HEK293 (cell line): ENCODE measurements at regions of chr7 and their contacts with region 1.

Region 1: DNA sequence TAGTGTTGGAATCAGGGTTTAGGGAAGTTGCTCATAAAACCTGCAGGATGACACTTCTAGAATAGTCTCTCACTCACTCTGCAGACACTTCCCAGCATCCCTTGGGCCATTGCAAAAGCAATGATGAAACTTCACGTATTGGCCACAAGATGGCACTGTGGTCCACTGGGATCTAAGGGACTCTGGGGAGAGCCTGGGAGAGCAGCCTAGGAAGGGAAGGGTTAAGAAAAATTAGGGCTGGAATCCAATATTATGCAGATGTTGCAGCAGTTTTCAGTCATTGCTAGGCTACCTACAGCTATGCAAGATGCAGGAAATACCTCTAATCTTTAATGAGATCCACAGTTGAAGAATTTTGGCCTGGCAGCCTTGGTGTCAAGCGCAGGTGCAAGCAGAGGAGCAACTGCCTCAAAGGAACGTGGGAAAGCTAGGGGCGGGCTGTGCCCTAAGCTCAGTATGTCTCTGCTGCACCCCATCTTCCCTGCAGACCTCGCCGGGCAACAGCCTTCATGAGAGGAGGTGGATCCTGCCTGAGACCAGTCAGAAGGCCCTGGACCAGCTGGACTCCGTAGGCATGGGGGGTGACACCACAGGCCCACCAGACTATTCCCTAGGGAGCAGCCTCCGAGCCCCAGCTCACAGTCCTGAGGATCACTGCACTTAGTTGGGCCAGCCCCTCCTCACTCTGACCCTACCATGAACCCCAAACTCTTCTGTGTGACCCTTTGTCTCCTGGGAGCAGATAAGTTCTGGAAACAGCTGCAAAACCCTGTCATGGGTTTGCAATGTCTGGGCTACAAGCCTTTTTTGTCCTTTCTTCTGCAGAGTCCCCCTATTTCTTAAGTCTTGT is 127.9 kb upstream of the PRSS58 start:
- H3K4me3 ChIP-seq: no peak overlapping the region
- H3K27ac ChIP-seq: no peak overlapping the region
- H3K4me1 ChIP-seq: no peaks in the 10 kb centered on the region
- CTCF ChIP-seq: peak; percentile 48

Region 2: DNA sequence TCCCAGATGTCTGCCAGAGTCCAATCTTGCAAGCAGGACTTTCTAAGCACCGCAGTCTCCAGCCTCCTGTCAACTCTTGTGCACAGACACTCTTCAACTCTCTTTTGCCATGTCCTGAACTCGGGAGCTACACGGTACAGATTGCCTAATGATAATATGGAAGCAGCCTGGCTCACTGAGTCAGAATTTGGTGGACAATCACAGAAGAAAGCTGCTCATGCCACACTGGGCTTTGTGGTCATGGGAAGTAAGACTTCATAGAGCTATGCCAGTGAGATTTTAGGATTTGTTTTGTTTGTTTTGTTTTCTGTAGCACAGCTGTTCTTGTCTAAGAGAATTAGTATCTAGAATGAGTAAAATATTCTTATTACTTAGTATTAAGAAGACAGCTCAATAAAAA is 16.2 kb after region 1 on chr7:
- CTCF ChIA-PET with region 1: interaction called, 15 read pairs
- POLR2A ChIA-PET with region 1: no interaction called
- H3K4me3 ChIP-seq: no peak overlapping the region
- H3K27ac ChIP-seq: no peak overlapping the region
- H3K4me1 ChIP-seq: no peaks in the 10 kb centered on the region
- CTCF ChIP-seq: no peak

Region 3: GRCh38 chr7:142528608-142529408 is 143.1 kb after region 1 on chr7:
- CTCF ChIA-PET with region 1: no interaction called
- POLR2A ChIA-PET with region 1: no interaction called
- H3K4me3 ChIP-seq: no peak overlapping the region
- H3K27ac ChIP-seq: no peak overlapping the region
- H3K4me1 ChIP-seq: no peaks in the 10 kb centered on the region
- CTCF ChIP-seq: no peak